CD14-positive monocyte (primary cell): ENCODE measurements at regions of chr20 and their contacts with region 1.

Region 1: GRCh38 chr20:62623488-62624324 is 18.6 kb upstream of the SLCO4A1 start:
- DNase-seq: peak; percentile 89 to 90 (median 89)
- H3K4me3 ChIP-seq: peak overlapping the region; percentile 0 to 65 (median 5)
- H3K4me3 Mint-ChIP-seq: peak overlapping the region; percentile 67 to 82
- H3K27ac ChIP-seq: peak overlapping the region; percentile 91 to 96
- H3K27ac Mint-ChIP-seq: peak overlapping the region; percentile 93 to 98 (median 95)
- H3K4me1 ChIP-seq: peaks cover 49 to 57% of the 10 kb centered on the region in 2 donors
- H3K4me1 Mint-ChIP-seq: peaks cover 49% of the 10 kb centered on the region
- H3K27me3 ChIP-seq: no peaks in the 10 kb centered on the region
- H3K27me3 Mint-ChIP-seq: peaks cover 0 to 3% (median 2%) of the 10 kb centered on the region in 3 donors
- CTCF ChIP-seq: no peak

Region 2: GRCh38 chr20:62652051-62652926 is 28.6 kb after region 1 on chr20:
- intact Hi-C with region 1: loop called in 1 of 2 experiments (anchors 2 kb)
- DNase-seq: peak; percentile 89 to 95 (median 93)
- H3K4me3 ChIP-seq: peak overlapping the region in 2 of 3 experiments; percentile 15 to 57
- H3K4me3 Mint-ChIP-seq: peak overlapping the region; percentile 59 to 82
- H3K27ac ChIP-seq: peak overlapping the region; percentile 94 to 96
- H3K27ac Mint-ChIP-seq: peak overlapping the region; percentile 95 to 98 (median 97)
- H3K4me1 ChIP-seq: peaks cover 24 to 29% of the 10 kb centered on the region in 2 donors
- H3K4me1 Mint-ChIP-seq: peaks cover 30% of the 10 kb centered on the region
- H3K27me3 ChIP-seq: no peaks in the 10 kb centered on the region
- H3K27me3 Mint-ChIP-seq: peaks cover 0 to 9% (median 2%) of the 10 kb centered on the region in 3 donors
- CTCF ChIP-seq: peak; percentile 27

Region 3: DNA sequence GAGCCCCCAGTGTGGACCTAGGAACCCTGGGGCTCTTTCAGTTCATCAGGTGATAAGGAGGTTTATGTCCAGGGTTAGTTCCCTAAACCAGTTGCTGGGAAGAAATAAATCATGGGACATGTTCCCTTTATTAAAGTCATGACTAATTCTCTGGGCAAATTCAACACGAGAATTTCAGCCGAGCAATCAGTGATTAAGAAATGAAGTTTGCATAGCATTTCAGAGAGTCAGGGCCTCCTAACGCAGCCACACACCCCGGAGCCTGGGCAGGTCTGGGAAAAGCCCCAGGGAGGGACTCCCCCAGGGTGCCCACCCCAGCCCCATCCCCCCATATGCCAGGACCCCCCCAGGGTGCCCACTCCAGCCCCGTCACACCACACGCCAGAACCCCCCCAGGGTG is 38.7 kb after region 1 on chr20:
- intact Hi-C with region 1: loop called in 1 of 2 experiments (anchors 5 kb)
- DNase-seq: peak; percentile 72 to 88 (median 87)
- H3K4me3 ChIP-seq: no peak overlapping the region
- H3K4me3 Mint-ChIP-seq: no peak overlapping the region
- H3K27ac ChIP-seq: no peak overlapping the region
- H3K27ac Mint-ChIP-seq: peak overlapping the region in 1 of 7 donors; percentile 72
- H3K4me1 ChIP-seq: peaks cover 34 to 35% of the 10 kb centered on the region in 2 donors
- H3K4me1 Mint-ChIP-seq: peaks cover 36% of the 10 kb centered on the region
- H3K27me3 ChIP-seq: no peaks in the 10 kb centered on the region
- H3K27me3 Mint-ChIP-seq: peaks cover 0 to 2% (median 1%) of the 10 kb centered on the region in 3 donors
- CTCF ChIP-seq: no peak